Left colon (tissue), 2 donors: ENCODE measurements at regions of chr1 and their contacts with region 1.

Region 1: GRCh38 chr1:203440771-203441170 is 34.8 kb upstream of the PRELP start:
- DNase-seq: peak; percentile 80 to 81
- ATAC-seq: peak; percentile 94

Region 2: DNA sequence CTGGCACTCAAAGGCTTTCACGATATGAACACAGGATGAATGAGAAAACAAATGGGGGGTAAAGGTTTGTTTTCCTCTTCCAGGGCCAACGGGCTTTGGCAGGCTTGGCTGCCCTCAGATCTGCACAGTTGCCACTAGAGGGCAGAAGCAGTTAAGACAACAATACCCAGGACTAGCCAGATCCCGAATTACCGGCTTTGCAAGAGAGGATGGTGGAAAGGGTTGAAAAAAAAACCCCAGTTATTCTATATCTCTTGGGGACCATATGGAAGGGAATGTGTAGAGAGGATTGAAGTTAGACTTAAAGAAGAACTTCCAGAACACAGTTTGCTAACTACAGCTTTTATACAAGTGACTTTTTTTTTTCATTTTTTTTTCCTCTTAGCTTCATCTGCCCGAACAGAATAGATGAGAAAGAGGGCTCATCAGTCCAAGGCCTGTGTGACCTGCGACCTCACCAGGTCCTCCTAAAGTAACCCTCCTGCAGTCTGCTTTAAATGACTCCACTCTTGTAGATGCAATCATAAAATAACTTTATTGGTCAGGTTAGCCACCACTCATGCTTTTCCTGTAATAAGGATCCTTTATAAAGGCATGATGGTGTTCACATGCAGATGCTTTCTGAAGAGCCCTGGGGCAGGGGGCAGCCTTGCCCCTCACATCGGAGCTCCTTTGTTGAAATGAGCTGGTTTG is 100.5 kb before region 1 on chr1:
- intact Hi-C with region 1: loop called in 1 of 2 experiments (anchors 2 kb)
- DNase-seq: peak; percentile 69 to 77
- ATAC-seq: peak; percentile 76

Region 3: DNA sequence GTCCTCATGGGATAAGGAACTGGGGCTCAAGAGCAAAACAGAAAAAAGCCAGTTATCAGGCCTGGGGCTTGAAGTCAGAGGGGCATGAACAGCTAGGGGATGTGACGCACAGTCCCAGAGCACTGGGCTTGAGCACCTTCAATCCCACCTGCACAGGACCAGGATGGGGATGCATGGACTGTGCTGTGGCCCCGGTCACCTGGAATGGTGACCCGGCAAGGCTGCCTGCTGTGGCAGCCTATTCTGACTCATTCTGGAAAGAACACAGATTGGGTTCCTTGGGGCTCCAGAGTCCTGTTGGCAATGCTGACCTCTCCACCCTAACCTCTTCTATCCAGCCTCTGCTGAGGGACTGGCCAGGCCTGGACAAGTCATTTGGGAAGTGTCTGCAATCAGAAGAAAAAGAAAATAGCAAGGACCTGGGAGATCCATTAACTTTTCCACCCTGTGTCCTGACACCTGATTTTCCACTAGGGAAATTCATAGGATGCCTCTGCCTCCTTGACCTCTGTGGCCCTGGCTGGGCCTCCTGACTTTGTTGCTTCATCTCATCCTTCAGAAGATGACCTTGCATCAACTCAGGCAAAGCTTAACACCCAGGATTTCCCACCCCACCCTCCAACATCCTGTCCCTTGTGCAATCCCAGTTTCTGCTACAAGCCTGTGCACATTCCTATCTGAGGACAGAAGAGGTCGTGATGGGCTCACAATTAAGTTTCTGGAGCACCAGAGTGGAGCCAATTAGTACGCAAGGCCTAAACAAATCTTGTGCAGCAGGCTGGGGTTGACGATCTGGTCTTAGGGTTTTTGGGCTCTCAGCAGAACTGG is 71.9 kb before region 1 on chr1:
- intact Hi-C with region 1: loop called (anchors 10 kb)
- DNase-seq: peak in 1 of 2 donors; percentile 58
- ATAC-seq: no peak